ENCODE measurements at regions of chr15 and their contacts with region 1.

Region 1: DNA sequence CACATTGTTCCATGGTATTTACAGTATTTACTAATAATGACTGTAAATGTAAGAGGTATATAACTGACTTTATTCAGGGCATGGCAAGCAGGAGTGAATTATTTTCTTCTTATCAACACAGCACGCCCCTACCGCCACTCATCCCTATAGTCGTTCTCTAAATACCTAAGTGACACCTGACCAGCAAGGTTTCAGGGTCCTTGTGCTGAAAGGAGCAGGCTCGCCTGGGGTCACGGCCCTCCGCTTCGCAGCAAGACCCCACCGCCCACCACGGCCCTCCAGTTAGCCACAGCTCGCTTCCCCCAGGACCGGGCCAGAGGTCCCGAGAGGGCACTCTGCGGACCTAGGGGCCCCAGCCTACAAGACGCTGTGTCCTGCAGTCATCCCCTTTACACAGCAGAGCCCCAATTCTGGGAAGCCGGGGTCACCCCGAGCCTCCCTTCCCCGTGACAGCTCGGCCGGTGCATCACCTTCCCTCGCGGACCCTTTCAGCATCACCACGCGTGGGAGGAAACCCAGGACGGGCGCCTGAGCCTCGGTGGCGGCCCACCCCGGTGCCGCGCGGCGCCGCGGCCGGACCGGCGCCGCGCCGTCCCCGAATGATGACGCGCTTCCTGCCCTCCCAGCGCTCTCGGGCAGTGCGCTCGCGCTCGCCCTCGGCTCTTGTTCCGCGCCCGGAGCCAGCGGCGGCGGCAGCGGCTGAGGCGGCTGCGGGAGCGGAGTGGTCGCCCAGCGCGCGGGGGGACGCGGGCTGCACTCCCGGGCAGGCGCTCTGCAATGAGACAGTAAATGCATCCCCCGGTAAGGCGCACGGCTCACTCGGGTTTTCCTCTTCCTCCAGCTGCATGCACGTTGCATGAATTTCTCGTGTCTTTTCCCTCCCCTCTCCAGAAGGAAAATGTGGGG is 225.1 kb upstream of the C2CD4B start:
- DNase-seq: peak; percentile 84
- ATAC-seq: peak; percentile 90

Region 2: DNA sequence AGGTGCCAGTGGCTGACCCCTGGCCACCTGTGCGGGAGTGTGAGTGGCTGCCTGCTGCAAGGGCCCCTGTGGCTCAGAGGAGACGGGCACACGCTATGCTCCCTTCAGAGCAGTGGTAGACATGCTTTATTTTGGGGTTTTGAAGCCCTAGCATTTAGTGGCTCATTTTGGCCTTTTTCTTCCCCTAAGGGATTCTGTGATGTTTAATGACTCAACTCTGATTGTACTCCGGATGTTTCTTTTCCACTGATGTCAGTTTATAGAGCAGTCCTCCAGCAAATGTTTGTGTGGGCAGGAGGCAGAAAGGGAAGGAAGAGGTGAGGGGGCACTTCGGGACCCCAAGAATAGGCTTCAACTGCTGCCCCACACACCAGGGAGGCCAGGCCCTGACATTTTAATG is 63.8 kb after region 1 on chr15:
- intact Hi-C with region 1: loop called (anchors 2 kb)
- DNase-seq: no peak
- ATAC-seq: peak; percentile 18

Region 3: DNA sequence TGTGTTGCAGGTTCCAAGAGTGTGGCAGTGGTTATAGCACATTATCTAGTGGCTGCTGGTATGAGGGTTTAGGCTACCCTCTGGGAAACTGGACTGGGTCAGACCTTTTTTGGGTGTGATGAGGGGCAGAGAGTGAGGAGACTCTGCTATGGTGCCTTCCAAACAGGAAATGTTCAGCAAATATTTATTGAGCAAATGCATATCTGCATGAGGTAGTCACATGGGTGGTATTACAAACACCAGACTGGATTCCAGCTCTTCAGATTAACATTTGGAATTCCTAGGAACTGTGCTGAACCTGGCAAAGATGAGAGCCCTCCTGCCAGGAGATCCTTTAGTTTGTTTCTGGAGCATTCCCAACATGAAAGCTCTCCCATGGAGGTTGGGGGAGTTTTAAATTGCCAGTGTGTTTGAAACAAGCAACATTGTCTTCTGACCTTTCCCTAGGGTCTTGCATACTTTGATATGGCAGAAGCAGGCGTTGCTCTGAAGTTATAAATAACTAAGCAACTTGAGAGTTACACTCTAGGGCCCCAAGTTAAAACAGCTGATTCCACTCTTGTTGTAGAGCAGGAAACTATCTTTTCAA is 116.2 kb after region 1 on chr15:
- intact Hi-C with region 1: loop called (anchors 5 kb)
- DNase-seq: no peak
- ATAC-seq: peak; percentile 71

Region 4: DNA sequence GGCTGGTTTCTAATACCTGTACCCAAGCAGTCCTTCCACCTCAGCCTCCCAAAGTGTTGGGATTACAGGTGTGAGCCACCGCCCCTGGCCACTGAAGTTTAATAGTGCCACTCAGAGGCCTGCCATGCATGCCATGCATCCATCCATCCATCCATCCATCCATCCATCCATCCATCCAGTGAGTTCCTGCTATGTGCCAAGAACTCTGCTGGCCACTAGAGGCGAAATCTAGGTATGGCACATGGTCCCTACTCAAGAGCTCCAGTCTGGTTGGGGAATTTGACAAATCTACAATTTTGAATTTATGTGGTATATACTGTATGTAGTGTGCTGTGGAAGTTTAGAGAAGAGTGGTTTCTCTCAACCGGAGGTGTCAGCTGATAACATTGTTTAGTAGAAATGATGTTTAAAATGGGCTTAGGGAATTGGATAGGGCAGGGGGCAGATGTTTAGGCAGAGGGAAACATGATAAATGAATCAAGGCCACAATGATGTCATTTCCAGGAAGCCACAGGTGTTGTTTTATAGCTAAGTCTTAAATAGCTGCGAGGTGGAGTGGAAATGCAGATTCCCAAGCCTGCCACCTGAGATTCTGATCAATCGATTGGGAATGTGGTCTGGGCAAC is 159.3 kb after region 1 on chr15:
- intact Hi-C with region 1: loop called (anchors 5 kb)
- DNase-seq: no peak
- ATAC-seq: no peak

Region 5: GRCh38 chr15:62561059-62561519 is 171.0 kb after region 1 on chr15:
- intact Hi-C with region 1: loop called (anchors 5 kb)
- DNase-seq: no peak
- ATAC-seq: no peak

Region 6: GRCh38 chr15:62649793-62650420 is 259.8 kb after region 1 on chr15:
- intact Hi-C with region 1: loop called (anchors 1 kb)
- DNase-seq: peak; percentile 53
- ATAC-seq: peak; percentile 67

Region 7: DNA sequence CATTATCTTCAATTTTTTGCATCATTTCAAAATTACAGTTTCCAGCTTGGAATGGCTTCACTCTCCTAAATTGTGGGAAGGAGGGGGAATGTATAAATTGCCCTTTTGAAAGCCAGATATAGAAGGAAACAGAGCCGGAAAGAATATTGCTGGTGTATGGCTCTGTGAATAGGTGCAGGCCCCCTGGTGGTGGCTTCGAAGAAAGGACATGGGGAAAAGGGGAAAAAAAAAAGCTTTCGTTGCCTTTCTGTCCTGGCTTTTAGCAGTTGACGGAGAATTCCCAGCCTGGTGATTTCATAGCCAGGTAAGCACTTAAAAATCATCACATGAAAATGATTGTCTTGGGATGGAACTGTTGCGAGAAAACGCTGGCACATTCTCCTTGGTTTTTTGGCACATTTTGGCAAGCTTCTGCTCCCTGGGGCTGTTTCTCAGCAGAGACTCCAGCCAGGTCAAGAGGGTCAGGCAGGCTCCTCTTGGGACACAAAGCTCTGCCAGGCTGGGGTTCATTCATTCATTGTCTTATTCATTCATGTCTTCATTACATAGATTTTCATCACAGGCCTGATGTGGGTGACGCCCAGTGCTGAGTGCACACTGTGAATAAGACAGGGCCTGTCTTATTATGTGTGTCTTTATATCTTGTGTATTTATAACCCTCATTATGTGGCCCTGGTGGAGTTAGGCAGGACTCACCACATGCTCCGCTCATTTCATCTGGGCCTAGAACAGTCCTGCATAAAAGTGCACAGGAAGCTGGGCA is 352.5 kb after region 1 on chr15:
- intact Hi-C with region 1: loop called (anchors 10 kb)
- DNase-seq: peak; percentile 78
- ATAC-seq: peak; percentile 82

Measured in Right ventricle myocardium inferior (tissue), 1 donor.